ENCODE measurements at regions of chr9 and their contacts with region 1.

Region 1: DNA sequence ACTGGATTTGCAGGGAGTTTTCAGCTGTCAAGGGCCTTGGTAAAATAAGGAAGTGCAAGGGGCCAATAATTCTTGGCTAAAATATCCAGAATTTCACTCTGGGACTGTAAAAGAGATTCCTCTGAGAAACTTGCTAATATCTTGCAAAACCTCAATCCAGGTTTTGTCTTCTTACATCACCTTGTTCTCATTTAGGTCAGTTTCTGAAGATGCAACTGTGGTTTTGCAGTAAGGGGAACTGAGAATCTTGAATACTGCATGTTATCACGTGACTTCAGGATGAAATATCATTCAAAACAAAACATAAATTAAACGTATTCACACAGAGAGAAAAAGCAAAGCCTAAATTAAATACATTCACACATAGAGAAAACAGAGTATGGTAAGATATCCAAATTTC is 35.0 kb upstream of the RIC1 start:
- DNase-seq: no peak
- H3K4me3 ChIP-seq: no peak overlapping the region
- H3K27ac ChIP-seq: no peak overlapping the region
- H3K4me1 ChIP-seq: no peaks in the 10 kb centered on the region
- H3K27me3 ChIP-seq: no peaks in the 10 kb centered on the region
- CTCF ChIP-seq: no peak
- EP300 ChIP-seq: no peak
- POLR2A ChIP-seq: no peak
- RAD21 ChIP-seq: no peak

Region 2: GRCh38 chr9:5450359-5451091 is 143.4 kb before region 1 on chr9 and contains the start of gene CD274:
- CTCF ChIA-PET with region 1: interaction called, 42 read pairs
- POLR2A ChIA-PET with region 1: no interaction called
- DNase-seq: peak; percentile 79 to 86
- H3K4me3 ChIP-seq: peak within 1 kb of the TSS; percentile 27 to 52 (median 28); a peak in 5 of 8 replicates
- H3K27ac ChIP-seq: no peak within 1 kb of the TSS
- H3K4me1 ChIP-seq: peaks cover 0 to 2% (median 0%) of the 10 kb centered on the region in 4 experiments; a peak in 2 of 7 replicates
- H3K27me3 ChIP-seq: no peaks in the 10 kb centered on the region; a peak in 1 of 7 replicates
- CTCF ChIP-seq: peak; percentile 77 to 88 (median 80)
- EP300 ChIP-seq: no peak
- POLR2A ChIP-seq: no peak
- RAD21 ChIP-seq: peak; percentile 85 to 89
- total RNA-seq, gene CD274: 0.15 TPM in 1 of 2 replicates, not detected in the other

Region 3: DNA sequence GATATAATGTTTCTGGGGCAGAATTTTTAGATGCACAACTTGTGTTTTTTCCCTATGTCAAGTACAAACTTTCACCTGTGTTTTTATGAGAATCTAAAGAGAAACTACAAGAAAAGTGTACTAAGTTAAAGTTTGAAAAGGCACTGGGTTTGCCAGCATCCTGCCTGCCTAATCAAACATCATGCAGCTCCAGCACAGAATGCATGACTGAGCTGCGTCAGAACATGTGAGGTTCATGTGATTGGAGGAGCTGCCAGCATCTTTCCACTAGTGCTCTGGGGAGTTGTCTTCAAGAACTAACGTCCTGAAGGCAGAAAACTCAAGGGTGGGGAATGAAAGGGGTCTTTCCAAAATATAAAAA is 11.1 kb before region 1 on chr9:
- CTCF ChIA-PET with region 1: interaction called, 13 read pairs
- POLR2A ChIA-PET with region 1: no interaction called
- DNase-seq: no peak
- H3K4me3 ChIP-seq: no peak overlapping the region
- H3K27ac ChIP-seq: no peak overlapping the region
- H3K4me1 ChIP-seq: no peaks in the 10 kb centered on the region
- H3K27me3 ChIP-seq: no peaks in the 10 kb centered on the region
- CTCF ChIP-seq: no peak
- EP300 ChIP-seq: no peak
- POLR2A ChIP-seq: no peak
- RAD21 ChIP-seq: no peak

Region 4: GRCh38 chr9:5608298-5609225 is 14.7 kb after region 1 on chr9:
- CTCF ChIA-PET with region 1: interaction called, 16 read pairs
- POLR2A ChIA-PET with region 1: no interaction called
- DNase-seq: no peak
- H3K4me3 ChIP-seq: no peak overlapping the region
- H3K27ac ChIP-seq: no peak overlapping the region
- H3K4me1 ChIP-seq: no peaks in the 10 kb centered on the region
- H3K27me3 ChIP-seq: no peaks in the 10 kb centered on the region
- CTCF ChIP-seq: no peak
- EP300 ChIP-seq: no peak
- POLR2A ChIP-seq: no peak
- RAD21 ChIP-seq: no peak